Activated naive CD4-positive, alpha-beta T cell treated with anti-CD3 and anti-CD28 coated beads for 36 hours (primary cell): ENCODE measurements at regions of chr3 and their contacts with region 1.

Region 1: GRCh38 chr3:141561426-141562034 is 74.7 kb downstream of the RASA2 start:
- DNase-seq: peak; percentile 61
- H3K4me3 Mint-ChIP-seq: no peak overlapping the region
- H3K27ac Mint-ChIP-seq: no peak overlapping the region
- H3K4me1 Mint-ChIP-seq: peaks cover 33% of the 10 kb centered on the region
- H3K27me3 Mint-ChIP-seq: no peaks in the 10 kb centered on the region

Region 2: DNA sequence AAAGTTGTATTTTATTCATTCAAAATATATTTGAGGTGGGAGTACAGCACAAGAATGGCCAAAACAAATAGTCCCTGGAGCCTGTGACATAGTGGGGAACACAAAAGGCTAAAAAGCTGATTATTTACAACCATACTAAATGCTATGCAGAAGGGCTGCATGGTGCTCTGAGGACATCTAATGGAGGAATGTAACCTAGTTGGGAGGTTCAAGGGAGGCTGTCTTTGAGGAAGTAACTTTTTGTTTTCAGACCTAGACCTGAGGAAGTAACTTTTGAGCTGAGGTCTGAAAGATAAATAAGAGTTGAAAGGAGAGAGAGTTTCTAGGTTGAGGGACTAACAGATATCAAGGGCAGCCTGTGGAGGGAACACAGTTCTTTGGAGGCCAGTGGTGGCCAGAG is 109.5 kb before region 1 on chr3:
- CTCF ChIA-PET with region 1: interaction called, 133 read pairs
- intact Hi-C with region 1: no loop called
- DNase-seq: peak; percentile 75
- H3K4me3 Mint-ChIP-seq: no peak overlapping the region
- H3K27ac Mint-ChIP-seq: no peak overlapping the region
- H3K4me1 Mint-ChIP-seq: peaks cover 20% of the 10 kb centered on the region
- H3K27me3 Mint-ChIP-seq: no peaks in the 10 kb centered on the region

Region 3: DNA sequence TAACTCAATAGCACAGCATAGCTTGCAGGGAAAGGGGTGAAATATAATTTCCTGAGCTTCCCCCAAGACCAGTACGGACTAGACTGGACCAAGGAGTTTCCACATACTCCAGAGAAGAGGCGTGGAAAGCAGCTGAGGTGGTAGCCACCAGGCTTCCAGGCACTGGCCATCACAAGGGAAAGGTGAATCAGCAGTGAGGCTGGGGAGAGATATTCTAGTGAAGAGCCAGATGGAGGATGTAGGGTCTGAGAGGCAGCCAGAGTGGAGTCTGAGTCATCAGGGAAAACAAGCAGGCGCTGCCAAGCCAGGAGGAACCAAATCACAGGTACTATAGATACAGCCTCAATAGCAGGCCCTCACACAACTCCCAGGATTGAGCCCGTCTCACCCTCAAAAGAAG is 84.3 kb before region 1 on chr3:
- CTCF ChIA-PET with region 1: interaction called, 108 read pairs
- intact Hi-C with region 1: loop called (anchors 1 kb)
- DNase-seq: no peak
- H3K4me3 Mint-ChIP-seq: no peak overlapping the region
- H3K27ac Mint-ChIP-seq: no peak overlapping the region
- H3K4me1 Mint-ChIP-seq: peaks cover 17% of the 10 kb centered on the region
- H3K27me3 Mint-ChIP-seq: no peaks in the 10 kb centered on the region

Region 4: DNA sequence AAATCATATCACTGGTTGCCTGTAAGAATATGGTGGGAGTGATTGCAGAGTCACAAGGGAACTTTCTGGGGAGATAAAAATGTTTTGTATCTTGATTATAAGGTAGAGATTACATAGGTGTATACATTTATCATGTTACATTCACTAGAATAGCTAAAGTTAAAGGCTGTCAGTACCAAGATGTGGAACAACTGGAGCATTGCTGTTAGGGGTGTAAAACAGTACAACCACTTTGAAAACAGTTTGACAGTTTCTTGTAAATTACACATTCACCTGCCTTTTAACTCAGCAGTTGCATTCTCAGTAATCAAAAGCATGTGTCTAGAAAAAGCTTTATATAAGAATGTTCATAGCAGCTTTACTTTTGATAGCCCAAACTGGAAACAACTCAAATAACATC is 47.1 kb before region 1 on chr3:
- CTCF ChIA-PET with region 1: interaction called, 14 read pairs
- intact Hi-C with region 1: no loop called
- DNase-seq: no peak
- H3K4me3 Mint-ChIP-seq: no peak overlapping the region
- H3K27ac Mint-ChIP-seq: peak overlapping the region; percentile 6
- H3K4me1 Mint-ChIP-seq: peaks cover 56% of the 10 kb centered on the region
- H3K27me3 Mint-ChIP-seq: no peaks in the 10 kb centered on the region

Region 5: GRCh38 chr3:141644931-141645330 is 83.4 kb after region 1 on chr3:
- CTCF ChIA-PET with region 1: interaction called, 15 read pairs
- intact Hi-C with region 1: loop called (anchors 5 kb)
- DNase-seq: peak; percentile 86
- H3K4me3 Mint-ChIP-seq: no peak overlapping the region
- H3K27ac Mint-ChIP-seq: no peak overlapping the region
- H3K4me1 Mint-ChIP-seq: peaks cover 3% of the 10 kb centered on the region
- H3K27me3 Mint-ChIP-seq: no peaks in the 10 kb centered on the region